ENCODE measurements at regions of chr5 and their contacts with region 1.

Region 1: DNA sequence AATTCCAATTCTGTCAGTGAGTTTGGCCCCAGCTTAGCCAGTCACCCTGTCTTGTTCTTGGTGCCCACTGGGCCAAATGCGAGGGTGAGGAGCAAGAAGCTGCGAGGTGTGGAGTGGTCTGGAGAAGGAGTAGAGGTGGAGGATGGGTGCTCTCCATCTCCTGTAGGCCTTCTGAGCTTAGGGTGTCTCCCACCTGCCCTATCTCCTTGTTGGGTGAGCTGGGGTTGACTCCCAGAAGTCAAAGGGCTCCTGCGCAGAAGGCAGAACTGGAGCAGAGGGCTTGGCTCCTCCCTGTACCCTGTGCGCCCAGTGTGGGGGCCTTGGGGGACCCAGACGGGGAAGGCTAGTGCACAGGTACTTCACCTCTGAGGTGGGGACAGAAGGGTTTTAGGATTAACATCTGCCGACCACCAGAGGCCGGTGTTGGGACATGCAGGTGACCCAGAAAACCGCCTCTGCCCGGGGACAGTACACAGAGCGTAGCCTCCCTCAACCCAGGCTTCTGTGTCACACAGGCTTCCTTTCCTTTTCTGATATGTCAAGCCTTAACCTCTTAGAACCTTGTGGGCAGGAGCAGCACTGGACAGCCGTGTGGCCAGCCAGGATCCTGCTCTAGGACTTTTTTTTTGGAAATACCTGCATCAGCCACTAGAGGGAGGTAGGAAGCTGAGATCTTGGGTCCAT is 16.9 kb downstream of the IL5 start:
- DNase-seq: peak in 6 of 9 experiments; percentile 24 to 69 (median 49)
- ATAC-seq: peak; percentile 72
- H3K4me3 ChIP-seq: no peak overlapping the region
- H3K4me3 Mint-ChIP-seq: no peak overlapping the region
- H3K27ac ChIP-seq: no peak overlapping the region
- H3K27ac Mint-ChIP-seq: no peak overlapping the region
- H3K4me1 ChIP-seq: peaks cover 8% of the 10 kb centered on the region
- H3K4me1 Mint-ChIP-seq: peaks cover 9% of the 10 kb centered on the region
- H3K27me3 ChIP-seq: no peaks in the 10 kb centered on the region
- H3K27me3 Mint-ChIP-seq: no peaks in the 10 kb centered on the region
- CTCF ChIP-seq: peak; percentile 97

Region 2: GRCh38 chr5:131944702-131945550 is 581.5 kb before region 1 on chr5:
- CTCF ChIA-PET with region 1: no interaction called
- POLR2A ChIA-PET with region 1: no interaction called
- intact Hi-C with region 1: no loop called
- DNase-seq: peak in 1 of 9 experiments; percentile 9
- ATAC-seq: no peak
- H3K4me3 ChIP-seq: no peak overlapping the region
- H3K4me3 Mint-ChIP-seq: no peak overlapping the region
- H3K27ac ChIP-seq: no peak overlapping the region
- H3K27ac Mint-ChIP-seq: no peak overlapping the region
- H3K4me1 ChIP-seq: no peaks in the 10 kb centered on the region
- H3K4me1 Mint-ChIP-seq: no peaks in the 10 kb centered on the region
- H3K27me3 ChIP-seq: no peaks in the 10 kb centered on the region
- H3K27me3 Mint-ChIP-seq: no peaks in the 10 kb centered on the region
- CTCF ChIP-seq: no peak

Region 3: GRCh38 chr5:132180134-132180745 is 346.2 kb before region 1 on chr5:
- CTCF ChIA-PET with region 1: no interaction called
- POLR2A ChIA-PET with region 1: no interaction called
- intact Hi-C with region 1: no loop called
- DNase-seq: peak in 2 of 9 experiments; percentile 18 to 39
- ATAC-seq: no peak
- H3K4me3 ChIP-seq: no peak overlapping the region
- H3K4me3 Mint-ChIP-seq: no peak overlapping the region
- H3K27ac ChIP-seq: no peak overlapping the region
- H3K27ac Mint-ChIP-seq: no peak overlapping the region
- H3K4me1 ChIP-seq: no peaks in the 10 kb centered on the region
- H3K4me1 Mint-ChIP-seq: peaks cover 14% of the 10 kb centered on the region
- H3K27me3 ChIP-seq: no peaks in the 10 kb centered on the region
- H3K27me3 Mint-ChIP-seq: no peaks in the 10 kb centered on the region
- CTCF ChIP-seq: peak; percentile 30

Region 4: DNA sequence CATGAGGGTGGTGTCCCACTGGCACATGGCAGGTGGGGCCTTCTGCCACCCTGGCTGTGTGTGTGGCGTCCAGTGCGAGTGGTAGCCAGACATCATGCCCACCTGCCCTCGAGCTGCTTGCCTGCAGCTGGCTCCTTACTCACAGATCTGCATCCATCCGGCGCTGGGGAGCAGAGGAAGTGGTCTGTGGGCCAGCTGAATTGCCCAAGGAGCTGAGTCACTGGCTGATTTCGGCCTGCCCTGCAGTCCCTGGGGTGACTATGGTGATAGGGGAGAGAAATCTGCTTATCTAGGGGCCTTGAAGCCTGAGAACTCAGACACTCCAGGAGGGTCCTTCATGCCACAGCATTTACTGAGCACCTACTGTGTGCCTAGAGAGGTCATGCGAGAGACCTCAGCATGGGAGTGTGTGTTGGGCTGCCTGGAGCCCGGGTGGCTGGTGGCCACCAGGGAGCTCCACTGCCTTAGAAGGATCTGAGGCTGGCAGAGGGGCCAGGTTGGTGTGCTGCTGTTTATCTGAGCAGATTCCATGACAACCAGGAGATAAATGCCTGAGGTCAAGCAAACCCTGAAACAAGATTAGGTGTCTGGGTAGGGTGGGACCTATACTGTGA is 99.8 kb before region 1 on chr5:
- CTCF ChIA-PET with region 1: no interaction called
- POLR2A ChIA-PET with region 1: no interaction called
- intact Hi-C with region 1: no loop called
- DNase-seq: peak in 8 of 9 experiments; percentile 52 to 85 (median 66)
- ATAC-seq: peak; percentile 13
- H3K4me3 ChIP-seq: peak overlapping the region; percentile 17 to 31
- H3K4me3 Mint-ChIP-seq: peak overlapping the region; percentile 71
- H3K27ac ChIP-seq: peak overlapping the region; percentile 77 to 98
- H3K27ac Mint-ChIP-seq: peak overlapping the region; percentile 97
- H3K4me1 ChIP-seq: peaks cover 99% of the 10 kb centered on the region
- H3K4me1 Mint-ChIP-seq: peaks cover 95% of the 10 kb centered on the region
- H3K27me3 ChIP-seq: no peaks in the 10 kb centered on the region
- H3K27me3 Mint-ChIP-seq: no peaks in the 10 kb centered on the region
- CTCF ChIP-seq: no peak

Region 5: GRCh38 chr5:132506094-132506692 is 20.2 kb before region 1 on chr5:
- CTCF ChIA-PET with region 1: interaction called, 13 read pairs
- POLR2A ChIA-PET with region 1: no interaction called
- intact Hi-C with region 1: no loop called
- DNase-seq: peak in 1 of 9 experiments; percentile 22
- ATAC-seq: peak; percentile 43
- H3K4me3 ChIP-seq: no peak overlapping the region
- H3K4me3 Mint-ChIP-seq: no peak overlapping the region
- H3K27ac ChIP-seq: no peak overlapping the region
- H3K27ac Mint-ChIP-seq: no peak overlapping the region
- H3K4me1 ChIP-seq: peaks cover 5% of the 10 kb centered on the region
- H3K4me1 Mint-ChIP-seq: peaks cover 2% of the 10 kb centered on the region
- H3K27me3 ChIP-seq: no peaks in the 10 kb centered on the region
- H3K27me3 Mint-ChIP-seq: peaks cover 21% of the 10 kb centered on the region
- CTCF ChIP-seq: no peak

Region 6: DNA sequence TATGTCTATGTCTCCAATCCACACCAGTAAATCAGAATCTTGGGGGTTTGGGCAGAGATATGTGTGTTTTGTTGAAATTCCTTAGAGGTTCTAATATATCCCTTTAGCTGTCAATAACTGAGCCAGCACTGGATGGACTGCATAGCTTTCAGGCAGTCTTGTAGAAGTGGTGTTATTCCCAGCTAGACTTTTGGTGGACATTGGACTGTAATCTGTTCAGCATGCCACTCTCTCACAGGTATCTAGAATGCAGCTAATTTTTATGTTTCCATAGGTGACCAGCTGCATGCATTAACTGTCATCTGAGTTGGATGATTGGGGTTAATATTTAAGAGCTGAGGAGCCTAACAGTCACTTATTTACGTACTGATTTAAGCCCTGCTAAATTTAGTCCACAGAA is 86.4 kb after region 1 on chr5:
- CTCF ChIA-PET with region 1: no interaction called
- POLR2A ChIA-PET with region 1: no interaction called
- intact Hi-C with region 1: loop called in 1 of 2 experiments (anchors 10 kb)
- DNase-seq: no peak
- ATAC-seq: no peak
- H3K4me3 ChIP-seq: no peak overlapping the region
- H3K4me3 Mint-ChIP-seq: no peak overlapping the region
- H3K27ac ChIP-seq: no peak overlapping the region
- H3K27ac Mint-ChIP-seq: no peak overlapping the region
- H3K4me1 ChIP-seq: no peaks in the 10 kb centered on the region
- H3K4me1 Mint-ChIP-seq: no peaks in the 10 kb centered on the region
- H3K27me3 ChIP-seq: no peaks in the 10 kb centered on the region
- H3K27me3 Mint-ChIP-seq: no peaks in the 10 kb centered on the region
- CTCF ChIP-seq: no peak

Region 7: GRCh38 chr5:132714456-132715307 is 188.2 kb after region 1 on chr5:
- CTCF ChIA-PET with region 1: no interaction called
- POLR2A ChIA-PET with region 1: no interaction called
- intact Hi-C with region 1: loop called (anchors 1 to 5 kb)
- DNase-seq: peak in 2 of 9 experiments; percentile 14 to 41
- ATAC-seq: no peak
- H3K4me3 ChIP-seq: no peak overlapping the region
- H3K4me3 Mint-ChIP-seq: no peak overlapping the region
- H3K27ac ChIP-seq: no peak overlapping the region
- H3K27ac Mint-ChIP-seq: no peak overlapping the region
- H3K4me1 ChIP-seq: no peaks in the 10 kb centered on the region
- H3K4me1 Mint-ChIP-seq: peaks cover 6% of the 10 kb centered on the region
- H3K27me3 ChIP-seq: no peaks in the 10 kb centered on the region
- H3K27me3 Mint-ChIP-seq: no peaks in the 10 kb centered on the region
- CTCF ChIP-seq: peak; percentile 79

Region 8: GRCh38 chr5:132829742-132830435 is 303.5 kb after region 1 on chr5:
- CTCF ChIA-PET with region 1: interaction called, 10 read pairs
- POLR2A ChIA-PET with region 1: no interaction called
- intact Hi-C with region 1: no loop called
- DNase-seq: peak; percentile 43 to 84 (median 71)
- ATAC-seq: peak; percentile 89
- H3K4me3 ChIP-seq: peak overlapping the region; percentile 48 to 69
- H3K4me3 Mint-ChIP-seq: peak overlapping the region; percentile 85
- H3K27ac ChIP-seq: no peak overlapping the region
- H3K27ac Mint-ChIP-seq: no peak overlapping the region
- H3K4me1 ChIP-seq: peaks cover 16% of the 10 kb centered on the region
- H3K4me1 Mint-ChIP-seq: peaks cover 3% of the 10 kb centered on the region
- H3K27me3 ChIP-seq: peaks cover 20 to 21% of the 10 kb centered on the region in 2 experiments
- H3K27me3 Mint-ChIP-seq: peaks cover 47% of the 10 kb centered on the region
- CTCF ChIP-seq: peak; percentile 84

Region 9: GRCh38 chr5:132883261-132883834 is 356.9 kb after region 1 on chr5:
- CTCF ChIA-PET with region 1: interaction called, 3 read pairs
- POLR2A ChIA-PET with region 1: no interaction called
- intact Hi-C with region 1: loop called in 1 of 2 experiments (anchors 1 kb)
- DNase-seq: peak in 5 of 9 experiments; percentile 16 to 69 (median 24)
- ATAC-seq: peak; percentile 69
- H3K4me3 ChIP-seq: no peak overlapping the region
- H3K4me3 Mint-ChIP-seq: no peak overlapping the region
- H3K27ac ChIP-seq: no peak overlapping the region
- H3K27ac Mint-ChIP-seq: peak overlapping the region; percentile 11
- H3K4me1 ChIP-seq: no peaks in the 10 kb centered on the region
- H3K4me1 Mint-ChIP-seq: peaks cover 3% of the 10 kb centered on the region
- H3K27me3 ChIP-seq: no peaks in the 10 kb centered on the region
- H3K27me3 Mint-ChIP-seq: no peaks in the 10 kb centered on the region
- CTCF ChIP-seq: peak; percentile 46